ENCODE measurements at regions of chr11 and their contacts with region 1.

Region 1: GRCh38 chr11:117807482-117808327 is 10.7 kb upstream of the DSCAML1 start:
- DNase-seq: peak in 1 of 2 donors; percentile 57
- ATAC-seq: peak; percentile 68 to 74
- H3K4me3 ChIP-seq: no peak overlapping the region
- H3K27ac ChIP-seq: no peak overlapping the region
- H3K4me1 ChIP-seq: no peaks in the 10 kb centered on the region
- H3K27me3 ChIP-seq: peaks cover 0 to 11% (median 0%) of the 10 kb centered on the region in 3 donors
- CTCF ChIP-seq: peak; percentile 83 to 89 (median 87)
- POLR2A ChIP-seq: no peak

Region 2: GRCh38 chr11:117583063-117583801 is 224.5 kb before region 1 on chr11:
- in situ Hi-C with region 1: no loop called
- intact Hi-C with region 1: no loop called
- DNase-seq: no peak
- ATAC-seq: no peak
- H3K4me3 ChIP-seq: no peak overlapping the region
- H3K27ac ChIP-seq: no peak overlapping the region
- H3K4me1 ChIP-seq: no peaks in the 10 kb centered on the region
- H3K27me3 ChIP-seq: peaks cover 0 to 1% (median 0%) of the 10 kb centered on the region in 3 donors
- CTCF ChIP-seq: no peak
- POLR2A ChIP-seq: no peak

Region 3: GRCh38 chr11:117828611-117829368 is 21.1 kb after region 1 on chr11:
- in situ Hi-C with region 1: no loop called
- intact Hi-C with region 1: no loop called
- DNase-seq: no peak
- ATAC-seq: no peak
- H3K4me3 ChIP-seq: no peak overlapping the region
- H3K27ac ChIP-seq: peak overlapping the region in 2 of 4 donors; percentile 18 to 22
- H3K4me1 ChIP-seq: peaks cover 7 to 18% of the 10 kb centered on the region in 2 donors
- H3K27me3 ChIP-seq: no peaks in the 10 kb centered on the region
- CTCF ChIP-seq: no peak
- POLR2A ChIP-seq: no peak

Region 4: GRCh38 chr11:118051611-118052461 is 244.1 kb after region 1 on chr11:
- in situ Hi-C with region 1: loop called (anchors 10 kb)
- intact Hi-C with region 1: loop called (anchors 1 kb)
- DNase-seq: no peak
- ATAC-seq: no peak
- H3K4me3 ChIP-seq: no peak overlapping the region
- H3K27ac ChIP-seq: no peak overlapping the region
- H3K4me1 ChIP-seq: no peaks in the 10 kb centered on the region
- H3K27me3 ChIP-seq: no peaks in the 10 kb centered on the region
- CTCF ChIP-seq: no peak
- POLR2A ChIP-seq: no peak